ENCODE measurements at regions of chr7 and their contacts with region 1.

Region 1: DNA sequence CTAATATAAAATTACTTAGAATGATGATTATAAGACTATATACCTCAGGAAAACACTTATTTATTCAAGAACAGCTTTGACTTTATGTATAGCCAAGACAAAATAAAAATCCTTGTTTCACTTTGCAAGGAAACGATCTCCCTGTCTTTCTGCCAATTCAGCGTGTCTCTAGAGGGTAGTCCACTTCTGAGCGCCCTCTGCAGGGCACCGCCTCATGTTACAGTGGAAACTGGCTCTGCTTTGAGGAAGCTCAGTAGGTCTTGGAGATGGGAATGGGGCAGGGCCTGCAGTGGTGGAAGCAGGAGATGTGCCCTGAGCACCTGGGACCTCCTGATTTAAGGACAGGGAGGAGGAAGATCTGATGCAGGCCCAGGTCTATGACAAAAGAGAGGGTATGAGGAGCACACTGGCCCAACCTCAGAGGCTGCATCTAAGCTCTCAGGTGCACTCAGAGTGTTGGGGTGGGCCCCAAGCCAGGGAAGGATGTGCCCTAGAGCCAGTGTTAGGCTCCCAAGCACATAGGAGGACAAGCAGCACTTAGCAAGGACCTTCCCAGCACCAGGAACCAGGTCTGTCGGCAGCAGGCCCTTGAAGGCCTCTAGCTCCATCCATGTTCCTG is 481.0 kb downstream of the TNS3 start:
- DNase-seq: peak; percentile 68
- ATAC-seq: peak; percentile 59

Region 2: GRCh38 chr7:46369933-46370654 is 730.8 kb before region 1 on chr7:
- intact Hi-C with region 1: loop called (anchors 10 kb)
- DNase-seq: no peak
- ATAC-seq: peak; percentile 47

Region 3: DNA sequence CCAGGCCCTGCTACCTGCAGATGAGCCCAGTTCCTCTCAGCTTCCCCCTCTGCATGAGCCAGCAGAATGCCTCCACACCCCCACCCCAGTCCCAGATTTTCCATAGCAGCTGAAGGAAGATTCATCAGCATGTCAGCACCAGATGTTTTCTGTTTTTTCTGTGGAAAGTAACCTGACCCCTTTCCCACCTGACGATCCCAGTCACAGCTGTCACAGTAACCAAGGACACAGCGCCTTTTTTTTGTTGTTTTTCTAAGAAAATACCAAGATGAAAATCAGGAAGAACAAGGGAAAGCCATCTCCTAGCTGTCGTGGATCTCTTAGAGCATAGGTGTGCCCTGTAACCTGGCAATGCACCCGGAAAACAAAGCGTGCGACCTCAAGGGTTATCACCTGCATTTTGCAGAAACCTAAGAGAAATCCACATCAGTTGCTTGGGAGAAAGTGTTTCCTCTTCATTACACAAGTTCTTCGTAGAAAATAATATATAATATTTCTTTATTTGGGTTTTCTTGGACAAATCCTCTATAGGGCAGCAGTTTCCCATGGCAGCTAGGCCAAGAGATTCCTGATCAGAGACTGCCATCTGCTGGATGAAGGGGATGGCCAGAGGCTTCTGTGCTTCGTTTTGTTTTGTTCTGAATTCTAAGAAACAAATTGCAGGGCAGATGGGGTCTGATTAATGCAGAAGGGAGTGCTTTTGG is 79.0 kb after region 1 on chr7:
- intact Hi-C with region 1: loop called (anchors 10 kb)
- DNase-seq: no peak
- ATAC-seq: peak; percentile 52